ENCODE measurements at regions of chr17 and their contacts with region 1.

Region 1: GRCh38 chr17:7484067-7484918 is at the start of gene POLR2A:
- DNase-seq: peak; percentile 93 to 98
- H3K4me3 ChIP-seq: peak within 1 kb of the TSS; percentile 79 to 92 (median 84)
- H3K27ac ChIP-seq: peak within 1 kb of the TSS; percentile 96
- H3K4me1 ChIP-seq: peaks cover 2 to 18% (median 13%) of the 10 kb centered on the region in 4 experiments
- H3K27me3 ChIP-seq: no peaks in the 10 kb centered on the region
- CTCF ChIP-seq: no peak
- EP300 ChIP-seq: peak in 1 of 2 experiments; percentile 95; a peak in 1 of 3 replicates
- POLR2A ChIP-seq: peak; percentile 100
- RAD21 ChIP-seq: no peak
- total RNA-seq, gene POLR2A: 150 and 157 TPM in 2 replicates

Region 2: DNA sequence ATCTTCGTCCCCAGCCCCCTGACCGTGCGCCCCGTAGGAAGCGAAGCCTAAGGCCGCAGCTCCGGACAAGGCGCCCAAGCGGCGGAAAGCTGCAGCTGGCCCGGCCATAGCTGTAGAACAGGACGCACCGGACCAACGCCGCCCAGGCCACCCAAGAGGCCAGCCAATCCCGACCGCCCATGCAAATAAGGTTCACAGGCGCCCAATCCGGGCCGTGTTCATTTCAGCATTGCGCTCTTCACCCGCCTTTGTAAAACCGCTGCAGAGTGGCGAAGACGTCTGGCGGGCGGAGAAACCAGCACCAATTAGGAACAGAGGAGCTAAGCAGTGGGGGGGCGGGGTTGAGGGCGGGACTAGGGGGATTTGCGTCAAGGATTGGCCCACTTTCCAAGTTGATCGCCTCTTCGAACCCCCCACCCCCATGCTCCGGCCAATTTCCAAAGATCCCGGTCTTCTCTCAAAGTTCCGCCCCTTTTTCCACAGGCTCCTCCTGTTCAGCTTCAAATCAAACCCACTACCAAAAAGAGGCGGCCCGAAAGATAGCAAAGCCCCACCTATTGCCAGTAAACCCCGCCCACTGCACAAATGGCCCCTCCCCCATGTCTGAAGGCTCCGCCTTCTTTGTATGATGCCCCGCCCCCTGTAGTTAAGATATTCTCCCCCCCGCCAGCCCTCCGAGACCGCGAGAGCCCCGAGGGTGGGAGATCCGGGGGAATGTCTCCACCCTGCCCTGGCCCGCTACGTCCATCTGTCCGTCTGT is 80.1 kb before region 1 on chr17 and contains the start of gene TMEM256:
- CTCF ChIA-PET with region 1: no interaction called
- POLR2A ChIA-PET with region 1: interaction called, 17 read pairs
- DNase-seq: peak; percentile 96 to 99
- H3K4me3 ChIP-seq: peak within 1 kb of the TSS; percentile 72 to 94 (median 81)
- H3K27ac ChIP-seq: peak within 1 kb of the TSS; percentile 81; the same call in 1 of the 2 replicates
- H3K4me1 ChIP-seq: peaks cover 0 to 15% (median 11%) of the 10 kb centered on the region in 4 experiments; a peak in 5 of 7 replicates
- H3K27me3 ChIP-seq: no peaks in the 10 kb centered on the region; a peak in 1 of 7 replicates
- CTCF ChIP-seq: no peak
- EP300 ChIP-seq: no peak
- POLR2A ChIP-seq: peak in 1 of 2 experiments; percentile 74; a peak in 2 of 3 replicates
- RAD21 ChIP-seq: no peak
- total RNA-seq, gene TMEM256: 97.0 and 104 TPM in 2 replicates

Region 3: GRCh38 chr17:7444682-7445618 is 39.3 kb before region 1 on chr17 and contains the start of gene CHRNB1:
- CTCF ChIA-PET with region 1: interaction called, 8 read pairs
- POLR2A ChIA-PET with region 1: interaction called, 339 read pairs
- DNase-seq: peak in 1 of 2 experiments; percentile 94
- H3K4me3 ChIP-seq: peak within 1 kb of the TSS; percentile 39 to 73 (median 66)
- H3K27ac ChIP-seq: peak within 1 kb of the TSS; percentile 47; the same call in 1 of the 2 replicates
- H3K4me1 ChIP-seq: peaks cover 3 to 17% (median 13%) of the 10 kb centered on the region in 4 experiments
- H3K27me3 ChIP-seq: peaks cover 0 to 8% (median 6%) of the 10 kb centered on the region in 4 experiments; a peak in 6 of 7 replicates
- CTCF ChIP-seq: no peak
- EP300 ChIP-seq: no peak
- POLR2A ChIP-seq: no peak
- RAD21 ChIP-seq: no peak
- total RNA-seq, gene CHRNB1: 13.8 and 14.1 TPM in 2 replicates

Region 4: GRCh38 chr17:7466639-7467341 is 17.5 kb before region 1 on chr17:
- CTCF ChIA-PET with region 1: interaction called, 4 read pairs
- POLR2A ChIA-PET with region 1: interaction called, 200 read pairs
- DNase-seq: no peak
- H3K4me3 ChIP-seq: no peak overlapping the region
- H3K27ac ChIP-seq: no peak overlapping the region
- H3K4me1 ChIP-seq: peaks cover 0 to 1% (median under 1%) of the 10 kb centered on the region in 4 experiments; a peak in 3 of 7 replicates
- H3K27me3 ChIP-seq: no peaks in the 10 kb centered on the region
- CTCF ChIP-seq: no peak
- EP300 ChIP-seq: no peak
- POLR2A ChIP-seq: no peak
- RAD21 ChIP-seq: no peak

Region 5: GRCh38 chr17:7502987-7503386 is 18.7 kb after region 1 on chr17:
- CTCF ChIA-PET with region 1: interaction called, 11 read pairs
- POLR2A ChIA-PET with region 1: interaction called, 58 read pairs
- DNase-seq: peak in 1 of 2 experiments; percentile 67
- H3K4me3 ChIP-seq: no peak overlapping the region
- H3K27ac ChIP-seq: no peak overlapping the region
- H3K4me1 ChIP-seq: no peaks in the 10 kb centered on the region
- H3K27me3 ChIP-seq: no peaks in the 10 kb centered on the region
- CTCF ChIP-seq: peak; percentile 51 to 68 (median 65)
- EP300 ChIP-seq: no peak
- POLR2A ChIP-seq: peak in 1 of 2 experiments; percentile 34; a peak in 2 of 3 replicates
- RAD21 ChIP-seq: peak; percentile 71 to 76

Region 6: GRCh38 chr17:7515911-7516610 is 31.8 kb after region 1 on chr17:
- CTCF ChIA-PET with region 1: interaction called, 7 read pairs
- POLR2A ChIA-PET with region 1: interaction called, 24 read pairs
- DNase-seq: no peak
- H3K4me3 ChIP-seq: no peak overlapping the region
- H3K27ac ChIP-seq: no peak overlapping the region
- H3K4me1 ChIP-seq: no peaks in the 10 kb centered on the region
- H3K27me3 ChIP-seq: no peaks in the 10 kb centered on the region
- CTCF ChIP-seq: no peak
- EP300 ChIP-seq: no peak
- POLR2A ChIP-seq: no peak
- RAD21 ChIP-seq: no peak

Region 7: DNA sequence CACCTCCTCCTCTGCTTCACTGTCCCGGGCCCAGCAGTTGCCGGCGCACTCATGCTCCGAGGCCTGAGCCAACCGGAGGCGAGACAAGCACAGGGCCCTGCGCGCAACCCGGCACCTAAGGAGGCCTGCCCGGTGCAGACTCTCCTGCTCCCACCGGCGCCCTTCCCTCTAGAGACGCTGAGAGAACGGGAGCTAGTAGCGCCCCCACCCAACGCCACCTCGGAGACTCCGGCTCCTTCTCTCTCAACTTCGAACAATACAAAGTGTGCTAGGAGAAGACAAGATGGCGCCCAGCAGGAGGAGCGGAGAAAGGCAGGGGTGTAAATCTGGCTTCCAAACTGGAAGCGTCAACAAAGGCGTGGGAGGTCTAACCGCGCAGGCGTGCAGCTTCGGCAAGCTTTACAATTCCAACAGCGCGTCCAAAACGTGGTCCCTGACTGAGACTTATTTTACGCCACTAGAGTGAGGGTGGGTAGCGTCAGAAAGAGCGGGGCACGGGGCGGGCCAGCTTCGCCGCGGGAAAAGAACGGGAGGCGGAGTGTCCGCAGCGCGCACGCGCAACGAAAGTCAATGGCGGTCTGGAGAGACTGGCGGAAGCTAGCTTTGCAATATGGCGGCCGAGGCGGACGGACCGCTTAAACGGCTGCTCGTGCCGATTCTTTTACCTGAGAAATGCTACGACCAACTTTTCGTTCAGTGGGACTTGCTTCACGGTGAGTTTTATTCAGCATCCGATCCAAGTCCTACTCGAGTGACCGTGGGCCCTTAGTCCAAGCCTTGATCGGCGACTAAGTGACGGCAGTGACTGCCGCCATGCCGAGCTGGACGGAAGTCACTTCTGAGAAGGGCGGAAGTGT is 99.2 kb after region 1 on chr17 and contains the start of gene MPDU1:
- CTCF ChIA-PET with region 1: interaction called, 5 read pairs
- POLR2A ChIA-PET with region 1: interaction called, 15 read pairs
- DNase-seq: peak in 1 of 2 experiments; percentile 95
- H3K4me3 ChIP-seq: peak within 1 kb of the TSS; percentile 47 to 95 (median 70)
- H3K27ac ChIP-seq: peak within 1 kb of the TSS; percentile 98
- H3K4me1 ChIP-seq: peaks cover 0 to 19% (median 4%) of the 10 kb centered on the region in 4 experiments; a peak in 6 of 7 replicates
- H3K27me3 ChIP-seq: no peaks in the 10 kb centered on the region
- CTCF ChIP-seq: no peak
- EP300 ChIP-seq: no peak
- POLR2A ChIP-seq: peak; percentile 75 to 94
- RAD21 ChIP-seq: no peak
- total RNA-seq, gene MPDU1: 63.2 and 66.9 TPM in 2 replicates

Region 8: GRCh38 chr17:7676533-7676932 is 192.2 kb after region 1 on chr17:
- CTCF ChIA-PET with region 1: no interaction called
- POLR2A ChIA-PET with region 1: no interaction called
- DNase-seq: no peak
- H3K4me3 ChIP-seq: peak overlapping the region in 2 of 4 experiments; percentile 15 to 16; a peak in 2 of 8 replicates
- H3K27ac ChIP-seq: no peak overlapping the region; the same call in 1 of the 2 replicates
- H3K4me1 ChIP-seq: peaks cover 5 to 18% (median 12%) of the 10 kb centered on the region in 4 experiments
- H3K27me3 ChIP-seq: no peaks in the 10 kb centered on the region
- CTCF ChIP-seq: no peak
- EP300 ChIP-seq: no peak
- POLR2A ChIP-seq: no peak
- RAD21 ChIP-seq: no peak

Measured in H1 (cell line).